ENCODE measurements at regions of chr18 and their contacts with region 1.

Region 1: GRCh38 chr18:11937874-11938478 is 29.9 kb upstream of the MPPE1 start:
- DNase-seq: peak; percentile 23
- ATAC-seq: peak; percentile 84
- H3K4me3 ChIP-seq: no peak overlapping the region
- H3K27ac ChIP-seq: no peak overlapping the region
- H3K4me1 ChIP-seq: no peaks in the 10 kb centered on the region
- H3K27me3 ChIP-seq: no peaks in the 10 kb centered on the region
- CTCF ChIP-seq: peak; percentile 67 to 83 (median 69)
- EP300 ChIP-seq: no peak
- POLR2A ChIP-seq: no peak
- RAD21 ChIP-seq: peak; percentile 85

Region 2: DNA sequence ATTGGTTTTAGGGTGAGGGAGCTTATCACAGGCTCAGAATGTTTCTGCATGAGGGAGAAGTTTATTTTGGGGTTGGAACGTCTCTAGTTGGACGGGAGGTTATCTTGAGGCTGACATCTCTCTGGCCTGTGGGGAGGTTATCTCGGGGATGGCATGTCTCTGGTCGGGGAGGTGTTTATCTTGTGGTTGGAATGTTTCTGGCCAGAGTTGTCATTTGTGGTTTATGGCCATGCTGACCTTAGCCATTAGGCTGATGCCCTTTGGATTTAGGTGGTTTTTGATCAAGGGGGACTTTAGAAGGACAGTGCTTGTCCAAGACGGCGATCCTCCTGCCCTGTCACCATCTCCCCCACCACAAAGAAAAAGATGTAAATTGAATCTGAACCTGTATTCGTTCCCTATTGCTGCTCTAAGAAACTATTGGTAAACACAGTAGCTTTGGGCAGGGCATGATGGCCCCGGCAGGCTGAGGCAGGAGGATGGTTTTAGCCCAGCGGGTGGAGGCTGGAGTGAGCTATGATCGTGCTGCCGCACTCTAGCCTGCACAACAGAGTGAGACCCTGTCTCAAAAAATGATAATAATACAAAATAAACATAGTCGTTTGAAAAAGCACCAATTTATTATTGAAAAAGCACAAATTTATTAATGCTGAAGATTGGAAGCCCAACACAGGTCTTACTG is 12.0 kb before region 1 on chr18:
- CTCF ChIA-PET with region 1: interaction called, 35 read pairs
- POLR2A ChIA-PET with region 1: no interaction called
- RAD21 ChIA-PET with region 1: interaction called, 5 read pairs
- SMC1A ChIA-PET with region 1: interaction called, 22 read pairs
- in situ Hi-C with region 1: no loop called
- intact Hi-C with region 1: no loop called
- DNase-seq: no peak
- ATAC-seq: no peak
- H3K4me3 ChIP-seq: no peak overlapping the region
- H3K27ac ChIP-seq: no peak overlapping the region
- H3K4me1 ChIP-seq: peaks cover 8% of the 10 kb centered on the region; the same call in 1 of the 2 replicates
- H3K27me3 ChIP-seq: no peaks in the 10 kb centered on the region
- CTCF ChIP-seq: no peak
- EP300 ChIP-seq: no peak
- POLR2A ChIP-seq: no peak
- RAD21 ChIP-seq: no peak

Region 3: GRCh38 chr18:11981633-11982366 is 43.8 kb after region 1 on chr18:
- CTCF ChIA-PET with region 1: interaction called, 11 read pairs
- POLR2A ChIA-PET with region 1: no interaction called
- RAD21 ChIA-PET with region 1: interaction called, 4 read pairs
- SMC1A ChIA-PET with region 1: interaction called, 5 read pairs
- in situ Hi-C with region 1: no loop called
- intact Hi-C with region 1: no loop called
- DNase-seq: no peak
- ATAC-seq: peak; percentile 33
- H3K4me3 ChIP-seq: peak overlapping the region; percentile 70
- H3K27ac ChIP-seq: peak overlapping the region; percentile 42
- H3K4me1 ChIP-seq: peaks cover 3% of the 10 kb centered on the region; the same call in 1 of the 2 replicates
- H3K27me3 ChIP-seq: no peaks in the 10 kb centered on the region
- CTCF ChIP-seq: no peak
- EP300 ChIP-seq: no peak
- POLR2A ChIP-seq: no peak
- RAD21 ChIP-seq: no peak

Region 4: DNA sequence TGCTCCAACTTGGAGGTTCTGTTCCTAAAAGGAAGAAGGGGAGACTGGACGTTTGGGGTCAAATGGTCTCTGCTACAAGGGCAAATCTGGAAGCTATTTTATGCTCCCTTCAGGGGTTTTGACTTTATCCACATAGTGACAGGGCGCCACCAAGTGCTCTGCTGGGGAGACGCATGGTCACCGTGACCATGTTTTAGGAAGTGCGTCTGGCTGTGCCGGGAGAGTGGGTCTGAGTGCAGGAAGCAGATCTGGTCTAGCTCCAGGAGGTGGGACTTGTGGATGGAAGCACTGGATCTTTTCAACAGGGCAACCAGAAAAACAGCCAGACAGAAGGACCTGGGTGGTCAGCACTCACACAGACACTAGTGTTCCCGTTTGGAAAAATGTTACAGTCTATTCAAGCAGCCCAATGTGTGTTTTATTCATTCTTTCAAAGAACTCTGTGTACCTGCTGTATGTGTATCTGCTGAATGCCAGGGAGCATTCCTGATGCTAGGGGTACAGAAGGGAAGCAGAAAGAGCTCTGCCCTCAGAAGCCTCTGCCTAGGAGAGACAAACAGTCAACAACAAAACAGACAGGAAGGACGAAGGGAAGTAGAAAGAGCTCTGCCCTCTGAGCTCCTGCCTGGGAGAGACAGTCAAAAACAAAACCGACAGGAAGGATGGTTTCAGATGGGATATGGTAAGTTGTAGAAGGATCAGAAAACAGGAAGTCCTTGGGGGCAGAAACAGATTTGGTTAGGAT is 57.6 kb after region 1 on chr18:
- CTCF ChIA-PET with region 1: interaction called, 122 read pairs
- POLR2A ChIA-PET with region 1: no interaction called
- RAD21 ChIA-PET with region 1: interaction called, 40 read pairs
- SMC1A ChIA-PET with region 1: interaction called, 46 read pairs
- in situ Hi-C with region 1: loop called (anchors 5 kb)
- intact Hi-C with region 1: loop called (anchors 1 kb)
- DNase-seq: no peak
- ATAC-seq: peak; percentile 93
- H3K4me3 ChIP-seq: no peak overlapping the region
- H3K27ac ChIP-seq: no peak overlapping the region
- H3K4me1 ChIP-seq: peaks cover 8% of the 10 kb centered on the region
- H3K27me3 ChIP-seq: no peaks in the 10 kb centered on the region
- CTCF ChIP-seq: peak; percentile 80 to 90 (median 87)
- EP300 ChIP-seq: no peak
- POLR2A ChIP-seq: no peak
- RAD21 ChIP-seq: peak; percentile 88

Region 5: DNA sequence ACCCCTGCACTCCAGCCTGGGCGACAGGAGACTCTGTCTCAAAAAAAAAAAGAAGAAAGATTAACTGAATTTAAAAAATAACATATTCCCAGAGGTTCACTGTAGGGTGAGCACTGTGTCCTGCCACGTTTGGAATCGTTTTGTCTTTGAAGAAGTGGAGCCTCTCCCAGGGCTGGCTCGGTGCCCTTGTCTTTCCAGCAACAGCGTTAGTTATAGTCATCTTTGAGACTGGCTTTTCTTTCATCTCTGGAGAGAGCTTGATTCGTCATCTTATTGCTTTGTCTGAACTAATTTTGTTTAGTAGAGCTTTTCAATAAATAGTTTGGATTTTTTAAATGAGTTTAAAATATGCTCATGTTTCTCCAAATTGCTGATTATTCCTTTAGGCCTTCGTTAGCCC is 93.9 kb after region 1 on chr18:
- CTCF ChIA-PET with region 1: interaction called, 71 read pairs
- POLR2A ChIA-PET with region 1: interaction called, 3 read pairs
- RAD21 ChIA-PET with region 1: interaction called, 21 read pairs
- SMC1A ChIA-PET with region 1: interaction called, 18 read pairs
- in situ Hi-C with region 1: loop called (anchors 5 kb)
- intact Hi-C with region 1: no loop called
- DNase-seq: no peak
- ATAC-seq: no peak
- H3K4me3 ChIP-seq: no peak overlapping the region
- H3K27ac ChIP-seq: no peak overlapping the region
- H3K4me1 ChIP-seq: no peaks in the 10 kb centered on the region
- H3K27me3 ChIP-seq: no peaks in the 10 kb centered on the region
- CTCF ChIP-seq: no peak
- EP300 ChIP-seq: no peak
- POLR2A ChIP-seq: no peak
- RAD21 ChIP-seq: no peak

Region 6: DNA sequence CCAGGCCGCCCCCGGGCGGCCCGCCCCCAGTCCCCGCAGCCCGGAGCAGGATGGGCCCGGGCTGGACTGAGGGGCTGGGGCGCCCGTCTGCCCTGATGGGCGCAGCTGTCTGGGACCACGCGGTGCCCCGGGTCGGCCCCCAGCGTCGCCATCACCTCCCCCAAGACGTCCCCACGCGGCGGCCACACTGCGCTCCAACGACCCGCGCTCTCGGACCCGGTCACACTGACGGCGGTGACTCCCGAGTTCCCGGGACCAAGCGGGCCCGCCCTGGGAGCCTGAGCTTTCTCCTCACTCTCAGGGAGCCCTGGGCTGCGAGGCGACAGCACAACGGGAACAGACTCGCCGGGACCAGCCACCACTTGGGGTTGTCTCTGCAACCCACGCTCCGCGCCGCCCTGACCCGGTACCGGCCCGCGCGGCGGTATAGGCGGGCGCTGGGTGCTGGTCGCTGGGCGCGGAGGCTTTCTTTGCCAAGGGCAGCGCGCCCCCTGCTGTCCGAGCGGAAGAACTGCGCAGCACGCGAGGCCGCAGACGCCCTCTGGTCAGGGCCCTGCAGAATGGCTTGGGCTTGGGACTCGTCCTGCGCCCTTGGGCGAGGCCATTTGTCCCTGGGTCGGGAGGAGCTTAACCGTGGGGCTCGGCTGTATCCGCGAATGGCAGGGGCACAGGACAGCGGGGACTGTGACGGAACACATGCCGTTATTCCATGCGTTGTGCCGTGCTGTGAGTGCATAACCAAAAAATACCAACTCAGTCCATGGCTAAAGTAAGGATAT is 100.9 kb after region 1 on chr18:
- CTCF ChIA-PET with region 1: interaction called, 71 read pairs
- POLR2A ChIA-PET with region 1: interaction called, 3 read pairs
- RAD21 ChIA-PET with region 1: interaction called, 21 read pairs
- SMC1A ChIA-PET with region 1: interaction called, 18 read pairs
- in situ Hi-C with region 1: loop called (anchors 5 kb)
- intact Hi-C with region 1: loop called (anchors 1 kb)
- DNase-seq: no peak
- ATAC-seq: peak; percentile 97
- H3K4me3 ChIP-seq: peak overlapping the region; percentile 53; the same call in 1 of the 2 replicates
- H3K27ac ChIP-seq: no peak overlapping the region
- H3K4me1 ChIP-seq: peaks cover 5% of the 10 kb centered on the region
- H3K27me3 ChIP-seq: peaks cover 0 to 3% of the 10 kb centered on the region in 2 experiments; a peak in 2 of 4 replicates
- CTCF ChIP-seq: peak; percentile 95 to 99 (median 95); a peak in 5 of 6 replicates
- EP300 ChIP-seq: no peak
- POLR2A ChIP-seq: no peak
- RAD21 ChIP-seq: peak; percentile 83

Measured in GM12878 (cell line).